B cell (primary cell): ENCODE measurements at regions of chr11 and their contacts with region 1.

Region 1: GRCh38 chr11:3894128-3894731 is 38.8 kb downstream of the STIM1 start:
- DNase-seq: peak; percentile 95
- ATAC-seq: peak; percentile 98
- H3K4me3 ChIP-seq: peak overlapping the region in 4 of 5 experiments; percentile 23 to 53 (median 32)
- H3K4me3 Mint-ChIP-seq: peak overlapping the region; percentile 78
- H3K27ac ChIP-seq: peak overlapping the region; percentile 71 to 82
- H3K27ac Mint-ChIP-seq: peak overlapping the region; percentile 89
- H3K4me1 ChIP-seq: peaks cover 67 to 72% of the 10 kb centered on the region in 2 donors
- H3K4me1 Mint-ChIP-seq: peaks cover 70% of the 10 kb centered on the region
- H3K27me3 ChIP-seq: no peaks in the 10 kb centered on the region
- H3K27me3 Mint-ChIP-seq: no peaks in the 10 kb centered on the region
- CTCF ChIP-seq: no peak

Region 2: GRCh38 chr11:3824714-3825472 is 69.3 kb before region 1 on chr11:
- CTCF ChIA-PET with region 1: no interaction called
- POLR2A ChIA-PET with region 1: no interaction called
- intact Hi-C with region 1: no loop called
- DNase-seq: peak; percentile 83
- ATAC-seq: peak; percentile 96
- H3K4me3 ChIP-seq: no peak overlapping the region
- H3K4me3 Mint-ChIP-seq: no peak overlapping the region
- H3K27ac ChIP-seq: peak overlapping the region in 1 of 2 donors; percentile 74
- H3K27ac Mint-ChIP-seq: peak overlapping the region; percentile 69
- H3K4me1 ChIP-seq: peaks cover 13 to 15% of the 10 kb centered on the region in 2 donors
- H3K4me1 Mint-ChIP-seq: peaks cover 26% of the 10 kb centered on the region
- H3K27me3 ChIP-seq: no peaks in the 10 kb centered on the region
- H3K27me3 Mint-ChIP-seq: no peaks in the 10 kb centered on the region
- CTCF ChIP-seq: peak; percentile 81

Region 3: GRCh38 chr11:3841426-3842350 is 52.5 kb before region 1 on chr11:
- CTCF ChIA-PET with region 1: interaction called, 12 read pairs
- POLR2A ChIA-PET with region 1: interaction called, 7 read pairs
- intact Hi-C with region 1: loop called (anchors 1 kb)
- DNase-seq: peak; percentile 99
- ATAC-seq: no peak
- H3K4me3 ChIP-seq: peak overlapping the region; percentile 31 to 89 (median 85)
- H3K4me3 Mint-ChIP-seq: peak overlapping the region; percentile 84
- H3K27ac ChIP-seq: peak overlapping the region; percentile 95 to 98
- H3K27ac Mint-ChIP-seq: peak overlapping the region; percentile 98
- H3K4me1 ChIP-seq: peaks cover 39 to 44% of the 10 kb centered on the region in 2 donors
- H3K4me1 Mint-ChIP-seq: peaks cover 48% of the 10 kb centered on the region
- H3K27me3 ChIP-seq: no peaks in the 10 kb centered on the region
- H3K27me3 Mint-ChIP-seq: no peaks in the 10 kb centered on the region
- CTCF ChIP-seq: peak; percentile 81

Region 4: DNA sequence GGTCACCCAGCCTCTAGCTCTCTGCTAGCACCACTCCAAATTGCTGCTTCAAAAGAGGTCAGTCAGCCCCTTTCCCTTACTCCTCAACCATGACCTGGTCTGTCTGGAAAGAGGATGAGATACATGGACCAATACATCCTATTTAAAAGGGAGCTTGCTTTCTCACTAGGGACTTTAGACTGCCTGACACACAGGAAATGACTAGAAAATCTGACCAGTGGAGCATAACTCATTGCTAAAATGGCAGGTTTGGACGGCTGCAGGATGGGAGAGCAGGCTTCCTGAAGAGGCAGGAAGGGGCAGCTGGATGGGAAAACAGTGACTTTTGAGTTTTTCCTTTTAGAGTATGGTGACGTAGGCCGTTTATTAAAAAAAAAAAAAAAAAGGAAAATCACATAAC is 13.5 kb before region 1 on chr11:
- CTCF ChIA-PET with region 1: interaction called, 19 read pairs
- POLR2A ChIA-PET with region 1: interaction called, 16 read pairs
- intact Hi-C with region 1: loop called (anchors 1 kb)
- DNase-seq: peak; percentile 65
- ATAC-seq: peak; percentile 77
- H3K4me3 ChIP-seq: peak overlapping the region in 1 of 5 experiments; percentile 27
- H3K4me3 Mint-ChIP-seq: peak overlapping the region; percentile 87
- H3K27ac ChIP-seq: peak overlapping the region; percentile 68 to 93
- H3K27ac Mint-ChIP-seq: peak overlapping the region; percentile 92
- H3K4me1 ChIP-seq: peaks cover 79 to 87% of the 10 kb centered on the region in 2 donors
- H3K4me1 Mint-ChIP-seq: peaks cover 78% of the 10 kb centered on the region
- H3K27me3 ChIP-seq: no peaks in the 10 kb centered on the region
- H3K27me3 Mint-ChIP-seq: no peaks in the 10 kb centered on the region
- CTCF ChIP-seq: no peak

Region 5: DNA sequence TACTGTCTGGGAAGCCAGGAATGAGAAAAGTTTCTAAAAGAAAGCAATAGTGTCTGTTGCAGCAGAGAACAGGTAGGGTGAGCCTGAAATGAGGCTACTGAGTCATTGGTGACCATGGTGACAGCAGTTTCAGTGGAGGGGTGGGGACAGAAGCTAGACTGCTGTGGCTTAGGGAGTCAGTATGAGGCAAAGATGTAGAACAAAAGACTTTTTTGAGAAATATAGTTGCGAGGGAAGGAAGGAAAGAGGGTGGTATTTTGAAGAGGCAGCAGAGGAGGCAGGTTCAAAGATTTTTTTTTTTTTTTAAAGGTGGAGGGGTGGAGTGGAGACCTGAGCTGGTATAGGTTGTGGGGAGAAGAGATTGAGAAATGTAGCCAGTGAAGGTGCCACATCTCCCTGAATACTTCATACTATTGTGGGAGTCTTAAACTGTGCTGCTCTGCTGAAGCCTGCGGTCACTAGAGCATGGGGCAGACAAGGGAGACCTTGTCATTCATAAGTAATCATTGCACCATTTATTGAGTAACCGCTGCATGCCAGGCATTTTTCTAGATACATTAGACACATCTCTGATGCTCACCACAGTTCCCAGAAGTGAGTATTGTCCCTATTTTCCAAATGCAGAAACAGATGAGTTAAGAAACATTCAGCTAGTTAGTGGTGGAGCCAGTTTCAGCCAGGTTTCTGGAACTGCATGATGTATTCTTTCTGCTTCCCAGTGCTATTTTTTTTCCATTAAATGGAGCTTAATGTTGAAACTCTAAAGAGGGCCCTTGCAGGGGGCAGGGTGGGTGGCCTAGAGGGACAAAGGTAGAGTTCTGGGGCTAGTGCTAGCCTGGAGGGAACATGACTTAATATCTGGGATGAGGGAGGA is 11.1 kb after region 1 on chr11:
- CTCF ChIA-PET with region 1: interaction called, 3 read pairs
- POLR2A ChIA-PET with region 1: interaction called, 15 read pairs
- intact Hi-C with region 1: loop called (anchors 1 kb)
- DNase-seq: no peak
- ATAC-seq: peak; percentile 63
- H3K4me3 ChIP-seq: no peak overlapping the region
- H3K4me3 Mint-ChIP-seq: peak overlapping the region; percentile 49
- H3K27ac ChIP-seq: peak overlapping the region in 1 of 2 donors; percentile 46
- H3K27ac Mint-ChIP-seq: peak overlapping the region; percentile 37
- H3K4me1 ChIP-seq: peaks cover 61 to 66% of the 10 kb centered on the region in 2 donors
- H3K4me1 Mint-ChIP-seq: peaks cover 76% of the 10 kb centered on the region
- H3K27me3 ChIP-seq: no peaks in the 10 kb centered on the region
- H3K27me3 Mint-ChIP-seq: no peaks in the 10 kb centered on the region
- CTCF ChIP-seq: no peak

Region 6: DNA sequence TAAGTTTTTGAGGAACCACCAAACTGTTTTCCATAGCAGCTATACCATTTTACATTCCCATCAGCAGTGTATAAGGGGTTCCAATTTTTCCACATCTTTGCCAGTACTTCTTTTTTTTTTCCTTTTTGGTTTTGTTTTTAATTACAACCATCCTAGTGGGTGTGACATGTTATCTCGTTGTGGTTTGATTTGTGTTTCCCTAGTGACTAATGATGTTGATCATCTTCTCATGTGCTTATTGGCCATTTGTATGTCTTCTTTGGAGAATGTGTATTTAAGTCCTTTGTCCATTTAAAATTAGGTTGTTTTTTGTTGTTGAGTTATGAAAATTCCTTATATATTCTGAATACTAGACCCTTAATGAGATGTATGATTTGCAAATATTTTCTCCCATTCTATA is 20.6 kb after region 1 on chr11:
- CTCF ChIA-PET with region 1: no interaction called
- POLR2A ChIA-PET with region 1: no interaction called
- intact Hi-C with region 1: loop called (anchors 2 kb)
- DNase-seq: peak; percentile 66
- ATAC-seq: peak; percentile 67
- H3K4me3 ChIP-seq: no peak overlapping the region
- H3K4me3 Mint-ChIP-seq: peak overlapping the region; percentile 58
- H3K27ac ChIP-seq: peak overlapping the region; percentile 0 to 35
- H3K27ac Mint-ChIP-seq: peak overlapping the region; percentile 74
- H3K4me1 ChIP-seq: peaks cover 33 to 40% of the 10 kb centered on the region in 2 donors
- H3K4me1 Mint-ChIP-seq: peaks cover 66% of the 10 kb centered on the region
- H3K27me3 ChIP-seq: no peaks in the 10 kb centered on the region
- H3K27me3 Mint-ChIP-seq: no peaks in the 10 kb centered on the region
- CTCF ChIP-seq: no peak

Region 7: GRCh38 chr11:3929649-3930048 is 35.4 kb after region 1 on chr11:
- CTCF ChIA-PET with region 1: interaction called, 4 read pairs
- POLR2A ChIA-PET with region 1: interaction called, 4 read pairs
- intact Hi-C with region 1: loop called (anchors 1 kb)
- DNase-seq: no peak
- ATAC-seq: no peak
- H3K4me3 ChIP-seq: no peak overlapping the region
- H3K4me3 Mint-ChIP-seq: no peak overlapping the region
- H3K27ac ChIP-seq: peak overlapping the region in 1 of 2 donors; percentile 5
- H3K27ac Mint-ChIP-seq: no peak overlapping the region
- H3K4me1 ChIP-seq: peaks cover 31 to 33% of the 10 kb centered on the region in 2 donors
- H3K4me1 Mint-ChIP-seq: peaks cover 62% of the 10 kb centered on the region
- H3K27me3 ChIP-seq: no peaks in the 10 kb centered on the region
- H3K27me3 Mint-ChIP-seq: no peaks in the 10 kb centered on the region
- CTCF ChIP-seq: no peak

Region 8: GRCh38 chr11:3947061-3947460 is 52.8 kb after region 1 on chr11:
- CTCF ChIA-PET with region 1: interaction called, 4 read pairs
- POLR2A ChIA-PET with region 1: no interaction called
- intact Hi-C with region 1: loop called (anchors 5 kb)
- DNase-seq: peak; percentile 52
- ATAC-seq: peak; percentile 69
- H3K4me3 ChIP-seq: peak overlapping the region in 3 of 5 experiments; percentile 21 to 35 (median 28)
- H3K4me3 Mint-ChIP-seq: peak overlapping the region; percentile 55
- H3K27ac ChIP-seq: peak overlapping the region; percentile 59 to 84
- H3K27ac Mint-ChIP-seq: peak overlapping the region; percentile 87
- H3K4me1 ChIP-seq: peaks cover 80 to 83% of the 10 kb centered on the region in 2 donors
- H3K4me1 Mint-ChIP-seq: peaks cover 92% of the 10 kb centered on the region
- H3K27me3 ChIP-seq: no peaks in the 10 kb centered on the region
- H3K27me3 Mint-ChIP-seq: no peaks in the 10 kb centered on the region
- CTCF ChIP-seq: no peak